ENCODE measurements at regions of chr4 and their contacts with region 1.

Region 1: DNA sequence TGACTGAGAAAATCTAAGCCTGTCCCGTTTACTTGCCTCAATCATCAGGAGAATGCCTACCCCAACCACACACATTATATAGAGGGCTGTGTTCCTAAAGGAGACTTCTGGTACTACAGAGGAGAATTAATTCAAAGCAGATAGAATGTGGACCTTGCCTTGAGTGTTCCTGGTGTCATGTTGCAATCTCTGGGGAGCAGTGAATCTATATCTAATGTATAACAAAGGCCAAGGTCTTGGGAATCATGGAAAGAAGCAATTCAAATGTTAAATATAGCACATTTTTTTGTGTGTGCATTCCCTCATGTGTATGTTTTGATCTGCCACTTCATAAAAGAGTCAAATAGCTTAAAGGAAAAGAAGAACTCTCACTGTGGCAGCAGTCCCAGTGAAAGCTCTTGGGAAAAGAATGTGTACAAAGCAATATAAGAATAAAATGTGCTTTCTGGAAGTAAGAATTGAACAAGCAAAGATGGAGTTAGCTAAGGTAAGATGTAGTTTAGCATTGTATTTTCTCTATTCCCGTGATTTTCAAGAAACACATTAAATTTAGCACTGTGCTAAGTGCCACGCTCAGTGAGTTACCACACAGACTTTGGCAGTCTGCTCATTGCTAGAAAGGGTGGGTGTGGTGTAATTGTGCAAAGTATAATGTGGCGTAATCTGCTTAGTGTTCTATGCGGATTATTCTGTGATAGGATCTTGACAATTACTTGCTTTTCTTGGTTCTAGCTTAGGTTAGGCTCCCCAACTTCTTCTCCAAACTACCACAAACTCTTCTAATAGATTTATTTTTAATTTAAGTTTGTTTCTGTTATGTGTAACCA is 13.7 kb downstream of the ADH6 start:
- DNase-seq: no peak
- H3K4me3 ChIP-seq: no peak overlapping the region
- H3K27ac ChIP-seq: peak overlapping the region; percentile 25
- H3K4me1 ChIP-seq: peaks cover 9% of the 10 kb centered on the region
- H3K27me3 ChIP-seq: no peaks in the 10 kb centered on the region
- CTCF ChIP-seq: no peak

Region 2: GRCh38 chr4:99405433-99406115 is 200.2 kb after region 1 on chr4:
- intact Hi-C with region 1: loop called (anchors 10 kb)
- DNase-seq: peak; percentile 25
- H3K4me3 ChIP-seq: no peak overlapping the region
- H3K27ac ChIP-seq: peak overlapping the region; percentile 72
- H3K4me1 ChIP-seq: peaks cover 8% of the 10 kb centered on the region
- H3K27me3 ChIP-seq: no peaks in the 10 kb centered on the region
- CTCF ChIP-seq: peak; percentile 94